GM10248 (cell line): ENCODE measurements at regions of chr6 and their contacts with region 1.

Region 1: DNA sequence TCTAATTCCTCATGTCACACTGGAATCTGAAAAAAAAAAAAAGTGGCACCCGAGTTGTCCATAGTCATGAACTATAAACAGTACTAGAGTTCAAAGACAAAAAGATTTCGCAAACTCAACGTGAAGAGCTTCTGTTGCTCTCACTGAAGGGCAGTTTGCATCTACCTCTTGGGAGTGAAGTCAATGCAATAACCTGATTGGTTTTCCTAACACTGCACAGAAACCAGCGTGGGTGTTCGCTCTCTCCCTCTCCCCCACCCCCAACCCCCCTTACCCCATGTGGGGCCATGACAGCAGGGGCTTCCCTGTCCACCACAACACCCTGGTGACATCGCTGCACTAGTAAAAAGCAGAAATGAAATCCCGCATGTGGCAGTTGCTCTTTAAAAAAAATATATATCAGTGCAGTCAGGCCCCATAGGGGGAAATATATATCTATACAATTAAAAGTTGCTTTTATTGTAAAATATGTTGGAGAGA is 66.9 kb downstream of the GMPR start:
- DNase-seq: peak; percentile 90
- CTCF ChIP-seq: no peak

Region 2: DNA sequence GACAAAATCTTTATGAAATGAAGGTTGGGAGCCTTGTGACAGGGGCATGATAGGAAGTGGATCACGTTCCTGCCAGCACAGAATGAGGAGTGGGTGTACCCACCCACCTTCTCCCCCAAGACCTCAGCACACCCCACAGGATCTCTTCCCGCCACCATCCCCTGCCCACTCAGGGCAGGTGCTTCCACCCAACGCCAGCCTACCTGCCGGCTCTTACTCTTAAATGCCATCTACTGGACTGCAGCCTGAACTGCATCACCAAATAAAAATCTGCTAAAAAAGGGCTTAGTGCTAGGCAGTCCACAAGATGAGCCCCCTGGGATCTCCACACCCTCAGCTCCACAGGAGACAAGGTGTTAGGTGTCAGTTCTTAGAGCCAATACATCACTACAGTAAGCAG is 663.0 kb before region 1 on chr6:
- CTCF ChIA-PET with region 1: no interaction called
- POLR2A ChIA-PET with region 1: no interaction called
- DNase-seq: no peak
- CTCF ChIP-seq: no peak

Region 3: GRCh38 chr6:16319813-16320532 is 14.7 kb after region 1 on chr6:
- CTCF ChIA-PET with region 1: interaction called, 20 read pairs
- POLR2A ChIA-PET with region 1: interaction called, 4 read pairs
- DNase-seq: peak; percentile 59
- CTCF ChIP-seq: no peak